IMR-90 (cell line): ENCODE measurements at regions of chr11 and their contacts with region 1.

Region 1: GRCh38 chr11:17846852-17847453 is 112.4 kb downstream of the KCNC1 start:
- DNase-seq: peak; percentile 73
- ATAC-seq: peak; percentile 71
- H3K4me3 ChIP-seq: no peak overlapping the region
- H3K27ac ChIP-seq: no peak overlapping the region
- H3K4me1 ChIP-seq: peaks cover 16% of the 10 kb centered on the region
- H3K27me3 ChIP-seq: no peaks in the 10 kb centered on the region
- CTCF ChIP-seq: peak; percentile 54
- POLR2A ChIP-seq: no peak
- RAD21 ChIP-seq: peak; percentile 64

Region 2: DNA sequence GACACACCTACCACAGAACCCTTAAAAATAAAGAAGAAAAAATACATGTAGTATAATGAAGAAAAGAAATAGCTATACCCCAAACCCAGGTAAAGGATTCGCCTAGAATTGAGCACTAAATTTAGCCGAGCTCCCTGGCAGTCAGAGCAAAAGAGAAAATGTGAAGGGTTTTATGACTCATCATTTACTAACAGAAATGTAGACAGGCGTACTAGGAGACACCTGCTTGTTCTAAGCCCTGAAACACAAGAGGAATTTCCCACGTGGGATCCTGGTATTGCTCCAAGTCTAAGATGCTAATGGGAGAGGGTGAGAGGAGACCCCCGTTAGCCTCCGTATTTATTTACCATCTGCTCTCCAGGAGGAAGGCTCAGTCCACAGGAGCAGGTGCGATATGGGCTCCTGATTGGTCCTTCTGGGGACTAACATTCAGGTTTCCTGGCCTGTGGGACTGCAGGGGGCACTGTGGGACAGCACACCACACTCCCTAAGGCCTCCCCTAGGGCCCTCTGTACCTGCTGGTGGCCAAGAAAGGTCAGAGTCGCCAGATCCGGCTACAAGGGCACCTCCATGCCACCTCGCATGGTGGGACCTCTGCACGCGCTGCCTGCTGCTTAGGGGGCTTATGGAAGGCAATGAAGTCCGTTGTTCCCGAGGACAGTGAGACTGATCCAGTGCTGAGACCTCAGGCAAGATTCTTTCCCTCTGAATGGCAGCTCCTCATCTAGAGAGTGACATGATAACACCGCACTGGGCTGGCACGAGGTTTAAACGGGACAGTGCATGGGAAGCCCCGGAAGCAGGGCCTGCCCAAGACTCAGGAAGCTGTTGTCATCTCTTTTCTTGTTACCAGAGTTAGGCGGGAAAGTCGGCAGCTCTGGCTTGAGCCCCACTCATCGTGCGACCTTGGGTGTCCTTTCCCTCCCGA is 86.6 kb before region 1 on chr11:
- CTCF ChIA-PET with region 1: no interaction called
- POLR2A ChIA-PET with region 1: no interaction called
- dilution Hi-C with region 1: no loop called
- in situ Hi-C with region 1: no loop called
- intact Hi-C with region 1: loop called (anchors 5 kb)
- DNase-seq: peak; percentile 39
- ATAC-seq: peak; percentile 91
- H3K4me3 ChIP-seq: no peak overlapping the region
- H3K27ac ChIP-seq: no peak overlapping the region
- H3K4me1 ChIP-seq: no peaks in the 10 kb centered on the region
- H3K27me3 ChIP-seq: peaks cover 13% of the 10 kb centered on the region; the same call in 1 of the 2 replicates
- CTCF ChIP-seq: peak; percentile 73
- POLR2A ChIP-seq: no peak
- RAD21 ChIP-seq: peak; percentile 83

Region 3: GRCh38 chr11:17770048-17770652 is 76.8 kb before region 1 on chr11:
- CTCF ChIA-PET with region 1: interaction called, 4 read pairs
- POLR2A ChIA-PET with region 1: no interaction called
- dilution Hi-C with region 1: no loop called
- in situ Hi-C with region 1: no loop called
- intact Hi-C with region 1: loop called (anchors 2 kb)
- DNase-seq: no peak
- ATAC-seq: no peak
- H3K4me3 ChIP-seq: no peak overlapping the region
- H3K27ac ChIP-seq: no peak overlapping the region
- H3K4me1 ChIP-seq: no peaks in the 10 kb centered on the region
- H3K27me3 ChIP-seq: peaks cover 4% of the 10 kb centered on the region; the same call in 1 of the 2 replicates
- CTCF ChIP-seq: no peak
- POLR2A ChIP-seq: no peak
- RAD21 ChIP-seq: no peak

Region 4: DNA sequence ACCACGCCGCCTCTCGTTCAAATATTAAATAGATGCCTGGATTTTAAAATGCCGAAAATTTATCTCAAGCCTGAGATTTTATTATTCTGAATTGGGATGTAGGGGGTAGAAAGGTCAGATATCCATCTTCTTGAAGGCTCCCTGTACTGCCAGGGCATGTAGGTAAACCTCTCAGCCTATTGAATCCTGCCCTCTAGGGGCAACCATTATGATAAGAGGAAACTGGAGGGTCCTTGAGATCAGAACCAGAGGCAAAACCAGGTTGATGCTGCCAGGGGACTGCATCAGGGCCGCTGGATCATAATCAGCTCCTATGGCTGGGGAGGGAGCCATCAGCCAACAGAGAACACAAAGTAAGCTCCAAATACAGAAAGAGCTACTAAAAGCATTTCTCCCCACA is 19.9 kb before region 1 on chr11:
- CTCF ChIA-PET with region 1: no interaction called
- POLR2A ChIA-PET with region 1: no interaction called
- dilution Hi-C with region 1: no loop called
- in situ Hi-C with region 1: no loop called
- intact Hi-C with region 1: no loop called
- DNase-seq: no peak
- ATAC-seq: no peak
- H3K4me3 ChIP-seq: no peak overlapping the region
- H3K27ac ChIP-seq: no peak overlapping the region
- H3K4me1 ChIP-seq: peaks cover 10% of the 10 kb centered on the region
- H3K27me3 ChIP-seq: no peaks in the 10 kb centered on the region
- CTCF ChIP-seq: peak; percentile 24; the same call in 1 of the 2 replicates
- POLR2A ChIP-seq: no peak
- RAD21 ChIP-seq: 0 out of 2 replicates have a peak, but pooled peaks have one; percentile 4